Heart left ventricle (tissue), 16 donors: ENCODE measurements at regions of chr7 and their contacts with region 1.

Region 1: GRCh38 chr7:150903606-150904005 is 51.3 kb downstream of the AOC1 start:
- DNase-seq: peak; percentile 75 to 92 (median 87)
- ATAC-seq: peak; percentile 92 to 97 (median 94)
- H3K4me3 ChIP-seq: no peak overlapping the region
- H3K27ac ChIP-seq: peak overlapping the region in 11 of 12 donors; percentile 1 to 76 (median 66)
- H3K4me1 ChIP-seq: peaks cover 0 to 35% (median 8%) of the 10 kb centered on the region in 12 donors
- H3K27me3 ChIP-seq: peaks cover 0 to 38% (median 0%) of the 10 kb centered on the region in 9 donors
- CTCF ChIP-seq: peak in 2 of 12 donors; percentile 8 to 18
- POLR2A ChIP-seq: no peak

Region 2: DNA sequence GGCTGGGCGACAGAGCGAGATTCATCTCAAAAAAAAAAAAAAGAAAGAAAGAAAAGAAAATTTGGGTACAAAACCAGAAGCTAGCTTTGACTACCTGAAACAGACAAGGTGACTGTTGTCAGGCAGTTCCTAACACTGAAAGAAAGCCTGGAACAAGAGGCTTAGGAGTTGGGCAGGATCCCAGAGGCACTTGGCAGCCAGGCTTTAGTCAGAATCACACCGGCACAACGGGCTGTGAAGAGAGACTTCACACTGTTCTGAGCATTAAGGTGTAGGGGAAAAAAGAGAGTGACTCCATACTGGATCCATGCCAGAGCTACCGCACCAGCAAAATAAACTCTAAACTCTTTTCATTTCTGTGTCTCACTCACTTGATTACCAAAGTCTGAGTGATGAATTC is 1261.0 kb before region 1 on chr7:
- intact Hi-C with region 1: no loop called
- DNase-seq: peak in 3 of 5 donors; percentile 35 to 71 (median 54)
- ATAC-seq: peak; percentile 72 to 88 (median 83)
- H3K4me3 ChIP-seq: no peak overlapping the region
- H3K27ac ChIP-seq: no peak overlapping the region
- H3K4me1 ChIP-seq: no peaks in the 10 kb centered on the region
- H3K27me3 ChIP-seq: peaks cover 0 to 5% (median 0%) of the 10 kb centered on the region in 9 donors
- CTCF ChIP-seq: no peak
- POLR2A ChIP-seq: no peak

Region 3: DNA sequence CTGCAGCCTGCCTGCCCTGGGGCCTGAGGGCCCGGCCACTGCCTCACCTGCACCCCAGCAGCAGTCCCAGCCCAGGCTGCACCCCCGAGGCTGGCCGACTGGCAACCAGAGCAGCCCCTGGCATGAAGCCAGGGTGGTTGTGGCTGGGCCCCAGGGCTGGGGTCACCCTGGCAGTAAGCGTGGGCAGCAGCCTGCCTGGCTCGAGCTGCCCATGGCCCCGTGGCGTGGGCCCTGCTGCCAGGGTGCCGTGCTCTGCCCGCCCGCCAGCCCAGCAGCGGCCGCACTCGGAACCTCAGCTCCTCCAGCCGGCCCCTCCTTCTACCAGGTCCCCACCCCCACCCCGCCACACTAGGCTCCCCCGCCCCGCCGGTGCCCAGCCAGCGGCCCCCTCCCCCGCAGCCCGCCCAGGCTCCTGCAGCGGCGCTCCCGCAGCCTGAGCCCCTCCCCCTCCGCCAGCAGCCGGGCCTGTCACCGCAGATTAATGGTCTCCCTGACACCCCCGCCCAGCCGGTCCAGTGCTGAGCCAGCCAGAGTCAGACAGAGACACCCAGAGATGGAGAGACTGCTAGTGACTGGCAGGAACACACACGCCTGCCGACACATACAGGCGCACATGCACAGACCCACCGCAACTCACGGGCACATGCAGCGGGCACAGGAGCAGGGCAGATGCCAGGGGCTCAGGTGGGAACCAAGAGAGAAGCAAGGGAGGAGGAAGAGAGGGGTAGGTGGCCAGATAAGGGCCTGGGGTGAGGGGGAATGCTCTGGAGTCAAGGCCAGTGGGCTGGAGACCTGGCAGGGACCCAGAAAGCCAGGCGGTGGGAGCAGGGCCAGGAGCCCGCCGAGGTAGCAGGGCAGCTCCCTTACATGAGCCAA is 52.2 kb after region 1 on chr7:
- intact Hi-C with region 1: loop called in 6 of 10 experiments (anchors 1 to 10 kb)
- DNase-seq: peak; percentile 58 to 86 (median 78)
- ATAC-seq: peak; percentile 12 to 62 (median 56)
- H3K4me3 ChIP-seq: peak overlapping the region in 3 of 12 donors; percentile 1 to 17 (median 7)
- H3K27ac ChIP-seq: peak overlapping the region in 11 of 12 donors; percentile 58 to 92 (median 80)
- H3K4me1 ChIP-seq: peaks cover 0 to 79% (median 23%) of the 10 kb centered on the region in 12 donors
- H3K27me3 ChIP-seq: peaks cover 0 to 46% (median 5%) of the 10 kb centered on the region in 9 donors
- CTCF ChIP-seq: no peak
- POLR2A ChIP-seq: no peak